ENCODE measurements at regions of chr6 and their contacts with region 1.

Region 1: GRCh38 chr6:166627033-166627874 is at the start of gene RPS6KA2:
- DNase-seq: peak; percentile 99 to 100
- ATAC-seq: peak; percentile 90 to 97 (median 90)
- H3K4me3 ChIP-seq: peak within 1 kb of the TSS; percentile 59
- H3K4me3 Mint-ChIP-seq: peak within 1 kb of the TSS; percentile 95
- H3K27ac ChIP-seq: peak within 1 kb of the TSS; percentile 32
- H3K27ac Mint-ChIP-seq: peak within 1 kb of the TSS; percentile 36 to 90
- H3K4me1 ChIP-seq: peaks cover 20% of the 10 kb centered on the region
- H3K4me1 Mint-ChIP-seq: peaks cover 19 to 29% of the 10 kb centered on the region in 2 donors
- H3K27me3 ChIP-seq: peaks cover 22% of the 10 kb centered on the region
- H3K27me3 Mint-ChIP-seq: peaks cover 38 to 47% of the 10 kb centered on the region in 2 donors
- CTCF ChIP-seq: no peak
- total RNA-seq, gene RPS6KA2: 2.8 to 4.5 (median 2.9) TPM

Region 2: GRCh38 chr6:166417285-166417691 is 210.0 kb before region 1 on chr6:
- intact Hi-C with region 1: loop called (anchors 1 kb)
- DNase-seq: peak; percentile 44 to 90
- ATAC-seq: peak; percentile 82 to 86 (median 83)
- H3K4me3 ChIP-seq: no peak overlapping the region
- H3K4me3 Mint-ChIP-seq: peak overlapping the region; percentile 74
- H3K27ac ChIP-seq: no peak overlapping the region
- H3K27ac Mint-ChIP-seq: peak overlapping the region; percentile 79 to 83
- H3K4me1 ChIP-seq: peaks cover 80% of the 10 kb centered on the region
- H3K4me1 Mint-ChIP-seq: peaks cover 57 to 59% of the 10 kb centered on the region in 2 donors
- H3K27me3 ChIP-seq: no peaks in the 10 kb centered on the region
- H3K27me3 Mint-ChIP-seq: peaks cover 0 to 11% of the 10 kb centered on the region in 2 donors
- CTCF ChIP-seq: no peak

Region 3: DNA sequence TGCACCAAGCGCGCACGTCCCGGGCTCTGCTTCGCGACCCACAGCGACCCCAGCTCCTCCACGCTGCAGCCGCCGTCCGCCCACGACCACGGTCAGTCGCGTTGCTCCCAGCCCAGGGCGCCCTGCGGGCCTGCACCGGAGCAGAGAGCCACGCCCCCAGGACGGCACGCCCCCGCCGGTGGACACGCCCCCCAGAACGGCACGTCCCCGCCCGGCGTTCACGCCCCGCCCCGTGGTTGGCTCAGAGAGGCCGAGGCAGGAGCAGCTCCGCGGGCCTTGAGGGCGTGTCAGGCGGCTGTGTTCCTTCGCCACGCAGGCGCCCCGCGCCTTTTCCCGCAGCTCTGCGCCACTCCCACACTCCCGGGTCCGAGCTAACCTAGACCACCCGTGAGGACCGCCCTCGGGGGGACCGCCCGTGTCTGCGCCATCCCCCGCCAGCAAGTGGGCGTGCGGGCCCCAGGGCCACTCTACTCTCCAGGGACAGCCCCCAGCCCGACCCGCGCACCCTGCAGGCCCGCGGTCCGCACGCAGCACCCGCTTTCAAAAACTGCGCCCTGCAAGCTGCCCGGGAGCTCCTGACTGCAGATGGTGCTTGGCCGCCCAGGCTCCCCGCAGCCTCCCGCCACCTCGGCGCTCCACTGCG is 329.3 kb after region 1 on chr6 and contains the start of gene RNASET2:
- intact Hi-C with region 1: loop called (anchors 5 kb)
- DNase-seq: peak; percentile 97 to 100
- ATAC-seq: peak; percentile 90 to 97 (median 93)
- H3K4me3 ChIP-seq: peak within 1 kb of the TSS; percentile 53
- H3K4me3 Mint-ChIP-seq: peak within 1 kb of the TSS; percentile 86
- H3K27ac ChIP-seq: peak within 1 kb of the TSS; percentile 95
- H3K27ac Mint-ChIP-seq: peak within 1 kb of the TSS; percentile 89 to 93
- H3K4me1 ChIP-seq: peaks cover 64% of the 10 kb centered on the region
- H3K4me1 Mint-ChIP-seq: peaks cover 48 to 67% of the 10 kb centered on the region in 2 donors
- H3K27me3 ChIP-seq: no peaks in the 10 kb centered on the region
- H3K27me3 Mint-ChIP-seq: no peaks in the 10 kb centered on the region
- CTCF ChIP-seq: no peak
- total RNA-seq, gene RNASET2: 65.1 to 106 (median 84.5) TPM

Region 4: DNA sequence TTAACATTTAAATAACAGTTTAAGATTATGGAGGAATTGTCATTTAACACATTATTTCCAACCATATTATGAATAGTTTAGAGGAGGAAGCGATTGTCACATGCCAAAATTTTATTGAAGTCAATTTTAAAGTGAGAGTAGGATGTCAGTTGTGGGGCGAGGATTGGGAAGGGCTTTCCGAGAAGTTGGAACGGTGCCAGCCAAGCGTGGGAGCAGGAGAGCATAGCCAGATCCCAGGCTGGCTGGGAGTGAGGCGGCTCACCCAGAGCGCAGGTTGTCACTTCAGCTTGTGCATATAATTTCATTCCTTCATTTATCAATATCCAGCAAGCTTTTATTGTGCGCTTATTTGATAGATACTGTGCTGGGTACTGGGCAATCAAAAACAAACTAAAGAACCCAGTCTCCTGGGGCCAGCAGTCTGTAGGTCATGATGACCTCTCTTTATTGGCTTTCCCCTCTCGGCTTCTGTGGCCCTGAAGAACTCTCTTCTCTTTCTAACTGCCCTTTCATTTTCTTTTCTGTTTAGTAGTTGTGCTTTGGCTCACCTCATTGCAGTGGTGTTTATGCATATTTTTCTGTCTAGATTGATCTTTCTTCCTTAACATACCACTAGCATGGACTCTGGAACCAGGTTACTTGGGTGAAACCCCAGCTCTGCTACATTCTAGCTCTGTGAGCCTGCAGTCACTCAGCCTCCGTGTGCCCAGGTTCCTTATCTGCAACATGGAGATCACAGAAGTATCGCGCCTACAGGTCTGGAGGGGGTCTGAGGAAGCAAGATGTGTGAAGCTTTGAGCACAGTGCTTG is 378.3 kb after region 1 on chr6:
- intact Hi-C with region 1: loop called (anchors 10 kb)
- DNase-seq: no peak
- ATAC-seq: no peak
- H3K4me3 ChIP-seq: no peak overlapping the region
- H3K4me3 Mint-ChIP-seq: no peak overlapping the region
- H3K27ac ChIP-seq: no peak overlapping the region
- H3K27ac Mint-ChIP-seq: no peak overlapping the region
- H3K4me1 ChIP-seq: no peaks in the 10 kb centered on the region
- H3K4me1 Mint-ChIP-seq: peaks cover 14 to 18% of the 10 kb centered on the region in 2 donors
- H3K27me3 ChIP-seq: no peaks in the 10 kb centered on the region
- H3K27me3 Mint-ChIP-seq: no peaks in the 10 kb centered on the region
- CTCF ChIP-seq: no peak

Measured in natural killer cell (primary cell).